Activated T-helper 2 cell treated with anti-CD3 and anti-CD28 coated beads, Interferon-gamma antibody, Interleukin-2, Interleukin-4, amounts not matched to agents 10 μg/mL and 5 μg/mL and 100 μg/mL, durations not matched to agents 14 hours and 24 hours and 36 hours (primary cell): ENCODE measurements at regions of chr1 and their contacts with region 1.

Region 1: GRCh38 chr1:212432706-212433576 is at the start of gene NENF:
- DNase-seq: peak; percentile 73
- H3K4me3 Mint-ChIP-seq: peak within 1 kb of the TSS; percentile 76
- H3K27ac Mint-ChIP-seq: peak within 1 kb of the TSS; percentile 24
- H3K4me1 Mint-ChIP-seq: peaks cover 27% of the 10 kb centered on the region
- H3K27me3 Mint-ChIP-seq: peaks cover 3% of the 10 kb centered on the region
- total RNA-seq, gene NENF: 41.6 and 42.5 TPM in 2 replicates

Region 2: DNA sequence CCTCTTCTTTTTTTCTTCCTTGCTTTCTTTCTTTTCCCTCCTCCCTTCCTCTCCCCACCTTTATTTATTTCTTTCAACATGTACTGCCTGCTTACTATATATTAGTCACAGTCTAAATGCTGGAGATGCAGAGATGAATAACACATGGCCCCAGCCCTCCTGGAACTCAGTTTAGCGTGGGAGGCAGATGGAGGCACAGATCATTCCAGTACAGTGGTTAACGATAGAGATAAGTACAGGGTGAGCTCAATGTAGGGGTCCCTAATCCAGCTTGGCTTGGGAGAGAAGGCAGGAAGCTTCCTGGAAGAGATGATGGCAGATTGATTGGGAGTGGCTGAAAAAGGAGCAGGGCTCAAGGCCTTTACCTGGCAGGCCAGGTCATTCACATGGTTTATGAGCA is 203.3 kb before region 1 on chr1:
- intact Hi-C with region 1: no loop called
- DNase-seq: no peak
- H3K4me3 Mint-ChIP-seq: no peak overlapping the region
- H3K27ac Mint-ChIP-seq: no peak overlapping the region
- H3K4me1 Mint-ChIP-seq: peaks cover 45% of the 10 kb centered on the region
- H3K27me3 Mint-ChIP-seq: peaks cover 3% of the 10 kb centered on the region

Region 3: DNA sequence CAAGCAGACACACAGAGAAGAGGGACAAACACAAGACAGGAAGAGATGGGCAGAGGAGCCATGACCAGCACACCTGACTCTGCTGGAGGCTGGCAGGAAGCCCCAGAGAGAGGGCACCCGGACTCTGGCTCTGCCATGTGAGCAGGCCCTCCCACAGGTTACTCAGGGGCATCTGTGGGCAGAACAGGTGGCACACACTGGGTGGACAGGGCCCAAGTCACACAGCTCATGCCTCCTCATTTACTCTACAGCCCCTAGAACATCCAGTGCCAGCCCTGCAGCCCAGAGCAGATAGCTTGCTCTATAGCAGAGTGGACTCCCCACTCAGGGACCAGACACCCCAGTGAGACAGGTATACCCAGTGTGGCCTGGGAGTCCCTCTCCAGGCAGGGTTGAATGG is 46.9 kb before region 1 on chr1:
- intact Hi-C with region 1: no loop called
- DNase-seq: no peak
- H3K4me3 Mint-ChIP-seq: no peak overlapping the region
- H3K27ac Mint-ChIP-seq: no peak overlapping the region
- H3K4me1 Mint-ChIP-seq: no peaks in the 10 kb centered on the region
- H3K27me3 Mint-ChIP-seq: no peaks in the 10 kb centered on the region

Region 4: GRCh38 chr1:212414328-212415106 is 18.4 kb before region 1 on chr1 and contains the start of gene PACC1:
- intact Hi-C with region 1: loop called (anchors 1 kb)
- DNase-seq: peak; percentile 90
- H3K4me3 Mint-ChIP-seq: peak within 1 kb of the TSS; percentile 100
- H3K27ac Mint-ChIP-seq: peak within 1 kb of the TSS; percentile 96
- H3K4me1 Mint-ChIP-seq: peaks cover 22% of the 10 kb centered on the region
- H3K27me3 Mint-ChIP-seq: no peaks in the 10 kb centered on the region
- total RNA-seq, gene PACC1: 19.4 and 20.1 TPM in 2 replicates

Region 5: GRCh38 chr1:212700892-212701819 is 268.2 kb after region 1 on chr1:
- intact Hi-C with region 1: no loop called
- DNase-seq: peak; percentile 11
- H3K4me3 Mint-ChIP-seq: peak overlapping the region; percentile 90
- H3K27ac Mint-ChIP-seq: peak overlapping the region; percentile 85
- H3K4me1 Mint-ChIP-seq: peaks cover 62% of the 10 kb centered on the region
- H3K27me3 Mint-ChIP-seq: no peaks in the 10 kb centered on the region